ENCODE measurements at regions of chr3 and their contacts with region 1.

Region 1: DNA sequence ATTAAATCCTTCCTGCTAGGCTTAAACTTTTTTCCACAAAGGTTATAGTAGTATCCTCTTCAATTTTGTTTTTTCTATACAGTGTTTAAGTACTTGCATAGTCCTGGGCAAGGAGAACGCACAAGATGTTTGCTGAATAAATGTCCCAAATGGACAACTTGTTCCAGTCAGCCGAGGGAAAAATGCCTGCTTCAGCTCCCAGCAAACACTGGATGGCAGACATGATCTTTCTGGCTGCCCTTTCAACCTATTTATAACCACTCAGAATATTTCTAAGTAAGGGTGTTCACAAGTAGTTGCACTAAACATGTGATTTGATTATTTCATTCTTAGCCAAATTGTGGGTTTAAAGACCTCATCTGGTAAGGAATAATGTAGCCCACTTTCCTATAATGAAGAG is 29.8 kb downstream of the GNB4 start:
- DNase-seq: peak; percentile 3
- H3K4me3 ChIP-seq: no peak overlapping the region
- H3K27ac ChIP-seq: no peak overlapping the region
- H3K27me3 ChIP-seq: no peaks in the 10 kb centered on the region
- CTCF ChIP-seq: peak; percentile 59

Region 2: DNA sequence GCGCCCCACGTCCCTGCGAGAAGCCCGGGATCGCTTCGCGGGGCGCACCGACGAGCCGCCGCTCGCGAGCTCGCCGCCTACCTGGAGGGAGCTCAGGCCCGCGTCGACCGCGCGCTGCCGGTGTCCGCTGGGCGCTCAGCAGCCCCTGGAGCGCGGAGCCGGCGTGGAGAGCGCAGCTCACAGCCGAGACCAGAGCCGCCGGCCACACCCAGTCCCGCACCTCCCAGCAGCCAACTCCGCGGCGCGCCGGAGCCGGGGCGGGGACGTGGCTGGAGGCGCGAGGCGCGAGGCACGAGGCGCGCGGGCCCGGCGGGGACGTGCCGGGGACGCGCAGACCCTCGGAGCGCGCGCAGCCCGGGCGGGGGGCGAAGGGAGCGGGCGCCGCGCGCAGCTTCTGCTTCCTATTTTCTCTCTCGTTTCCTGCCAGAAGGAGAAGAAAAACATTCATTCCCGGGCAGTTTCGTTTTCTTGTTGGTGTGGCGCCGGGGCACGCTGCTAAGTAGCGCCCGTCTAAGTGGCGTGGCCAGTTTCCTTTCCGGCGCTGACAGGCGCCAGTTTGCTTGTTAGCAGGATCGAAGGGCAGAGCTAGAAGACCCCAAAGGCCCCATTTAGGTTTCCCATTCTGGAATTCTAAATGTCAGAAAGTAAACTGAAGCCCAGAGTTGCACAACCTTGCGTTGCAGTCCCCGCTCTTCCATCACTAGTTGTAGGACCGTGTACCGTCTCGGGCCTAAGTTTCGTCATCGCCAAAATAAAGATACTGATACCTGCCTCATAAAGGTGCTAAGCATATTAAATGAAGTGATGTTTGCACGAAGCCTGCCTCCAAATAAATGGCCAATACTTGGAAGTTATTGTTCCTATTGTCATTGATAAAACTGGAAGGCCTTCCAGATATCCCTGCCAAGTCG is 30.0 kb after region 1 on chr3 and contains the start of gene GNB4:
- CTCF ChIA-PET with region 1: no interaction called
- POLR2A ChIA-PET with region 1: no interaction called
- DNase-seq: peak; percentile 43
- H3K4me3 ChIP-seq: peak within 1 kb of the TSS; percentile 81
- H3K27ac ChIP-seq: peak within 1 kb of the TSS; percentile 94
- H3K27me3 ChIP-seq: no peaks in the 10 kb centered on the region
- CTCF ChIP-seq: no peak
- polyA plus RNA-seq, gene GNB4: 71.6 and 88.5 TPM in 2 replicates

Region 3: DNA sequence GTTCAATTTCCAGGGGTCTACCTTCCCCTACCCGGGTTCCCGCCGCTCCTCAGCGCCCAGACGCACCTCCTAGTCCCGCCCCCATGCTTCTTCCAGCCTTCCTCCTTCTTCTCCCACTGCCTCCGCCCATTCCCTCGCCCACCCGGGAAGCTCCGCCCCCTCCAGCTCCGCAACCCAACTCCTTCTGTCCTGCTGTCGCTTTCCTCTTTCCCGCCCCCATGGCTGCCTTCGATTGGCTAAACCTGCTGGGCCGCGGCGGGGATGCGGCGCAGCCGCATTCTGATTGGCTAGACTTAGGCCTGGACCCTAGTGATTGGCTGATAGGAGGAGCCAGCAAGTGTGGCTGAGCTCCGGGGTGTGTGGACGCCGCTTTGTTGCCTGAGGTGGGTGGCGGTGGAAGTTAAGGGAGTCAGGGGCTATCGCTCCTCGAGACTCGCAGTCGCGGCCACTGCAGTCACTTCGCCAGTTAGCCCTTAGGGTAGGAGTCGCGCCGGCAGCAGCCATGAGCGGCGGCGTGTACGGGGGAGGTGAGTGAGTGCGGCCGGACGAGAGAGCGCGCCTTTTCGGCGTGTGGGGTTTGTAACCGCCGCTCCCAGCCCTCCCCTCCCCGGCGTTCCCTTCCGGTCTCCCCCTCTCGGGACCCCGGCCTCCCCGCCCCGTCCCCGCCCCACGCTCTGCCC is 141.2 kb after region 1 on chr3 and contains the start of gene ACTL6A:
- CTCF ChIA-PET with region 1: interaction called, 19 read pairs
- POLR2A ChIA-PET with region 1: interaction called, 3 read pairs
- DNase-seq: peak; percentile 98
- H3K4me3 ChIP-seq: peak within 1 kb of the TSS; percentile 95
- H3K27ac ChIP-seq: peak within 1 kb of the TSS; percentile 82
- H3K27me3 ChIP-seq: no peaks in the 10 kb centered on the region
- CTCF ChIP-seq: no peak
- polyA plus RNA-seq, gene ACTL6A: 55.3 and 67.5 TPM in 2 replicates

Measured in AG04450 (cell line).